H1 (cell line): ENCODE measurements at regions of chr11 and their contacts with region 1.

Region 1: DNA sequence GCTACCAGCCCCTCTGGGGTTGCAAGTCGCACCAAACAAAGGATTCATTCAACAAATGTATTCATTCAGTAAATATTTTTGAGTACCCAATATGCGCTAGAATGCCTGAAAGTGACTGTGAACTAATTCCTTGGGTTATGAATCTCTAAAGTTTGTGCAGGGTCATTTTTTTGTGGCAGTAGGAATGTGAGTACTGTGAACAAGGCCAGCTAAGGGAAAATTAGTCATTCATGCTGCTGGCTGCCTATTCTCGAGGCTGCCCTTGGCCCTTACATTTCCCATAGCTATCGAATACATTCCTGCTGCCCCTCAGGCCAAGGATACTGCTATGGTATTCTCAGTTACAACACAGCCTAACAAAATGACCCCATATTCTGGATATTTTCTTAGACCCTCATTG is 141.6 kb downstream of the TRPC6 start:
- DNase-seq: no peak
- H3K4me3 ChIP-seq: no peak overlapping the region
- H3K27ac ChIP-seq: no peak overlapping the region
- H3K4me1 ChIP-seq: no peaks in the 10 kb centered on the region
- H3K27me3 ChIP-seq: no peaks in the 10 kb centered on the region
- CTCF ChIP-seq: no peak
- EP300 ChIP-seq: no peak
- POLR2A ChIP-seq: no peak
- RAD21 ChIP-seq: no peak

Region 2: DNA sequence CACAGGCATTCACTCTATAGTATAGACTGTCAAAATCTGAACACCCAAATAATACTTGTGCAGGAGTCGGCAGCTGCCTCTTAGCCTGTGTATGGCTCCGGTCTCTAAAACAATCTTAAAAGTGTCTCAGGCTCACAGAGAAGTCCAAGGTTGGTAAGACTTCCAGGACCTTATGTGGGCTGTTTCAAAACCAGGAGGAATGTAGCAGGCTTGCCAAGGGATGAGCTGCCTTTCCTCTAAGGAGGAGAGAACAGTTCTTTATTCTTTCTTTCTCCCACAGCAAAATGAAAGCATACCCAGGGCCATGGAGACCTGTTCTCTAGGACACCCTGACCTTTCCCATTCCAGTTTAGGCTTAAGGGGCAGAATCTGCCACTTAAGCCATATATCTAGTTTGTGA is 34.8 kb before region 1 on chr11:
- CTCF ChIA-PET with region 1: no interaction called
- POLR2A ChIA-PET with region 1: no interaction called
- DNase-seq: no peak
- H3K4me3 ChIP-seq: no peak overlapping the region
- H3K27ac ChIP-seq: no peak overlapping the region
- H3K4me1 ChIP-seq: no peaks in the 10 kb centered on the region
- H3K27me3 ChIP-seq: no peaks in the 10 kb centered on the region
- CTCF ChIP-seq: no peak
- EP300 ChIP-seq: no peak
- POLR2A ChIP-seq: no peak
- RAD21 ChIP-seq: no peak

Region 3: GRCh38 chr11:101456812-101457211 is 14.6 kb after region 1 on chr11:
- CTCF ChIA-PET with region 1: interaction called, 13 read pairs
- POLR2A ChIA-PET with region 1: no interaction called
- DNase-seq: no peak
- H3K4me3 ChIP-seq: no peak overlapping the region
- H3K27ac ChIP-seq: no peak overlapping the region
- H3K4me1 ChIP-seq: peaks cover 0 to 2% (median 0%) of the 10 kb centered on the region in 4 experiments; a peak in 1 of 7 replicates
- H3K27me3 ChIP-seq: no peaks in the 10 kb centered on the region
- CTCF ChIP-seq: no peak; a peak in 1 of 4 replicates
- EP300 ChIP-seq: no peak
- POLR2A ChIP-seq: no peak
- RAD21 ChIP-seq: peak in 1 of 2 experiments; percentile 38; a peak in 3 of 4 replicates

Region 4: DNA sequence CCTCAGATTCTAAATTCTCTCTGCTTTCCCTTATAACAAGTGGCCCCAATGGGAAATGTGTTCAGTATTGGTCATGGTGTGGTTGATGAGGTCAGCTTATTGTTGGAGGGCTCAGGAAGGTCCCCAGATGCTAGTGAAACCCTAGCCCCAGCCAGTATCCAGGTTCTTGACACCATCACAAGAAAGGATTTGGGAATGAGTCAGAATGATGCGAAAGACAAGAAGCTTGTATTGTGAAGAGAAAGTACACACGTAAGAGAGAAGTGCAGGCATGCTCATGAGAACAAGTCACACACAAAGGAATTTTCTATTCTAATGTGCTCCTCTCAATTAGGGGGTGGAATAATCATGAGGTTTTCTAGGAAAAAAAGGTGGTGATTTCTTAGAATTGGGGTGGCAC is 176.5 kb after region 1 on chr11:
- CTCF ChIA-PET with region 1: interaction called, 25 read pairs
- POLR2A ChIA-PET with region 1: no interaction called
- DNase-seq: no peak
- H3K4me3 ChIP-seq: no peak overlapping the region
- H3K27ac ChIP-seq: no peak overlapping the region
- H3K4me1 ChIP-seq: peaks cover 0 to 3% (median 0%) of the 10 kb centered on the region in 4 experiments; a peak in 1 of 7 replicates
- H3K27me3 ChIP-seq: peaks cover 0 to 1% (median 0%) of the 10 kb centered on the region in 4 experiments; a peak in 1 of 7 replicates
- CTCF ChIP-seq: no peak
- EP300 ChIP-seq: no peak
- POLR2A ChIP-seq: no peak
- RAD21 ChIP-seq: no peak

Region 5: DNA sequence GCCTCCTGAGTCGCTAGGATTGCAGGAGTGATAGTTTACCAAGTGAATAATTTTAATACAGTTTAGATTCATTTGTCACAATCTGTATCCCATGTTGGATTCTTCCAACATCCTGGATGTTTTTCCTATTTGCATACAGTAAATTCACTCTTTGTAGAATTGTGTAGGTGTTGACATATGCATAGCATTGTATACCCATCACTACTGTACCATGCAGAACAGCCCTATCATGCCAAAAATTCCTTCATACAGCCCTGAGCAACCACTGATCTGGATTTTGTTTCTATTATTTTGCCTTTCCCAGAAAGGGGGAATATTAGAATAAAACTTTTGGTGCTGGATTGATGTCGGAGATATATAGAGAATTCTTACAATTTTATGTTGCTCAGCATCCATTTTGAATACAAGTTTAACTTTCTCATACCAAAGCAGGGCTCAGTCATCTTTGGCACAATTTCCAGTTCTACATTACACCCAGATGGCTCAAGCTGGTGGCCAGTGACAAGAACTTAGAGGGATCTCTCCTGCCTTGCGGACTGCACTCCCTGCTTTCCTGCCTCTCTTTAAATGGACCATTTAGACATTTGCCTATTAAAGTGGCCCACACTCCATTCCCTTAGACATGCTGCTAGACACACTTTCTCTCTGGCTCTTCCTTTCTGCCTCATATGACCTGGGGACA is 559.6 kb after region 1 on chr11:
- CTCF ChIA-PET with region 1: no interaction called
- POLR2A ChIA-PET with region 1: no interaction called
- DNase-seq: no peak
- H3K4me3 ChIP-seq: no peak overlapping the region
- H3K27ac ChIP-seq: no peak overlapping the region
- H3K4me1 ChIP-seq: no peaks in the 10 kb centered on the region
- H3K27me3 ChIP-seq: no peaks in the 10 kb centered on the region
- CTCF ChIP-seq: no peak
- EP300 ChIP-seq: no peak
- POLR2A ChIP-seq: no peak
- RAD21 ChIP-seq: no peak